BJ (cell line): ENCODE measurements at regions of chr19 and their contacts with region 1.

Region 1: DNA sequence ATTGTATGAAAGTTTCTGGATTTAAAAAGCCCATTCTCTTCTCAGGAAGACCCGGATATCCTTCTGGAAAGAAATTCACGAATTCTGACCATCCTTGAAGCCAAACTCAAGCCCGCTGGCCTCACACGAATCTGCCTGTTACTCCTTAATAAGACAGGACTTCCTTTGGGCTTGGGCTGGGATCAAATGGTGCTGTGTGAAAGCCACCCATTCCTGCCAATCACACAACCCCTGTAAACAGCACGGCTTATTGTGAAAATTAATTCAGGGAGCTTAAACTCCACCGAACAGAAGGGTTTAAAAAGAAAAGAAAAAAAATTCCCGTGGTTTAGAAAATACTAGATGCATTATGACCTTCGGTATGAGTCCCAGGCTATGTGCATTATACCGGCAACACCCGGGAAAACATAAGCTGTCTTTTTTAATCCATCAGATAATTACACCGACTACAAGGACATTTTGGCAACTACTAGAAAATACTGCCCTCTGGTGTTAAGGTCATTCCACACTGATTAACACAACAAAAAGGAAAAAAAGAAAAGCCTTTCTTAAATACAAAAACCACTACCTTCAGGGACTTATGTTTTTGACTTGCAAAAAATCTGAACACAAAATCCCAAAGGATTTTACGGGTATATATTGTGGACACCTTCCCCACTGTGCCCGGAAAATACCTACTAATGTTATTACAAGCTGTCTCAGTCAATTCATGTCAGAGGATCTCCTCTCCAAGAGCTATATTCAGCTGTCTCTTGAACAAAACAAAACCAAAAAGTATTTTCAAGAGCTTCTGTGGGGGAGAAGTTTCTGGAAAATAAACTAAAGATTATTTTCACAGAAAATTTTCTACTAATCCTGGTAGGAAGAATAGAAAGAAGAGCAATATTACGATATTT is 76.0 kb upstream of the LSM14A start:
- DNase-seq: no peak
- H3K4me3 ChIP-seq: no peak overlapping the region
- H3K27me3 ChIP-seq: no peaks in the 10 kb centered on the region
- CTCF ChIP-seq: peak; percentile 54

Region 2: DNA sequence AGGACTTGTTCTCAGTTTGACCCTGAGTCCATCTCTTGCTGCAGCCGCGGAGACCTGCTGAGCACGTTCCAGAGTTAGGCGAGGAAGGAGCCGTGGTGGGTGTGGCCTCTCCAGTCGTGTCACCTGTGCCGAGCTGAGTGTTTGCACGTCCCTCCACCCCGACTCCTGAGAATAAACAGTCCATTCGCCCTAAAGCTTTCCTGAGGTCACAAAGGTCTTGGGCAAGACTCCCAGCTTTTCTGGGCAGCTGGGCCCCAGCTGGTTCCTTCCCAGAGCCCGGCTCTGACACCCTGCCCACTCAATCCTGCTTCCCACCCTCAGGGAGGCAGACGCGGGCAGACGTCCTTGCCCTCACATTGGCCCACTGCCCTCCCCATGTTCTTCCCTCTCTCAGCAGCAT is 157.5 kb before region 1 on chr19:
- CTCF ChIA-PET with region 1: no interaction called
- POLR2A ChIA-PET with region 1: no interaction called
- DNase-seq: no peak
- H3K4me3 ChIP-seq: no peak overlapping the region
- H3K27me3 ChIP-seq: no peaks in the 10 kb centered on the region
- CTCF ChIP-seq: no peak

Region 3: GRCh38 chr19:34034318-34034846 is 61.9 kb before region 1 on chr19:
- CTCF ChIA-PET with region 1: interaction called, 49 read pairs
- POLR2A ChIA-PET with region 1: no interaction called
- DNase-seq: no peak
- H3K4me3 ChIP-seq: no peak overlapping the region
- H3K27me3 ChIP-seq: no peaks in the 10 kb centered on the region
- CTCF ChIP-seq: no peak

Region 4: GRCh38 chr19:34540811-34541557 is 444.7 kb after region 1 on chr19:
- CTCF ChIA-PET with region 1: no interaction called
- POLR2A ChIA-PET with region 1: no interaction called
- DNase-seq: no peak
- H3K4me3 ChIP-seq: no peak overlapping the region
- H3K27me3 ChIP-seq: no peaks in the 10 kb centered on the region
- CTCF ChIP-seq: no peak